A549 (cell line): ENCODE measurements at regions of chr20 and their contacts with region 1.

Region 1: GRCh38 chr20:51562332-51563155 is 20.0 kb upstream of the NFATC2 start:
- DNase-seq: peak; percentile 65 to 90
- ATAC-seq: peak; percentile 64 to 76
- H3K4me3 ChIP-seq: peak overlapping the region; percentile 59
- H3K27ac ChIP-seq: peak overlapping the region; percentile 88 to 89
- H3K4me1 ChIP-seq: peaks cover 45% of the 10 kb centered on the region
- CTCF ChIP-seq: peak; percentile 41
- EP300 ChIP-seq: no peak
- POLR2A ChIP-seq: no peak
- RAD21 ChIP-seq: peak; percentile 39 to 71; a peak in 4 of 5 replicates

Region 2: DNA sequence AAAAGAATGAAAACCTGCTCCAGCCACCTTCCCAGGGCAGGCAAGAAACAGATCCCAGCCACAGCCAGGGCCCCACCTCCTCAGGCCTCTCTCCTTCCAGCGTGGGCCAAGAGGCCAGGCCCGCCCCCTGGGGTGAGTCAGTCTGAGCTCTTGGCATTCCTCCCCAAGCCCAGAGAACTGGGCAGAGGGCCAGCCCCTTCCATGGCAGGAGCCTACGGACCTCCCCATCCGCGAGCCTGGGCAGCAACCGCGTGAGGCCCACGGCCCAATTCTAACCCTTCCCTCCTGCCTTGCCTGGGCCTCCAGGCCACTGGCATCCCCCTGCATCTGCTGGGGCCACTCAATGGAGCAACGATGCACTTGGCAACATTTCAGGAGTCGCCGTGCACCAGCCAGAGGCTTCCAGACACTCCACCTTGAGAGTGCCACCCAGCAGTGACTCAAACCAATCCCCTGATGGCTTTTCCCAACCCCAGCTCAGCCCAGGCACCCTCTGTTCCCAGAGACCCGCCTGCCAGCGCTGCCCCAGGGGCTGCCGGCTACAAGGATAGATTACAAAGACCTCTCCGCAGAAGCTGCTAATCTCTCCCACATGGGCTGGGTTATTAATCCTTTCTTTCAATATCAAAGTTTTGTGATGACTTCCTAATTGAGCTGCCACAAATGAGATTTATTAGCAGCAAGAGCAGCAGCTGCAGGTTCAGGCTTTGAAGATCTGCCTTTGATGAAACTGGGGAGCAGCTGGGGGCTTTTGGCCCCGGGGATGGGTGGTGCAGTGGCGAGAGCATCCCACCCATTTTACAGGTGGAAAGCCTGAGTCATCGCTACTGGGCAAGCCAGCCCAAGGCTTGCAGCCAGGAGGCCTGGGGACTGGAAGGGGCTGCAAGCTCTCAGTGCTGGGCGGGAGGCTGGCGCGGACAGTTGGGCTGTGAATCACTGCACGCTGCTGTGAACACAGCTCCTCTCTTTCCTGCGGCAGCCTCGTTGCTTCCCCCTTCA is 105.7 kb before region 1 on chr20:
- CTCF ChIA-PET with region 1: interaction called, 9 read pairs
- POLR2A ChIA-PET with region 1: interaction called, 29 read pairs
- DNase-seq: peak; percentile 86 to 96
- ATAC-seq: peak; percentile 93 to 94
- H3K4me3 ChIP-seq: peak overlapping the region; percentile 24; the same call in 1 of the 3 replicates
- H3K27ac ChIP-seq: peak overlapping the region; percentile 90 to 92
- H3K4me1 ChIP-seq: peaks cover 20% of the 10 kb centered on the region
- CTCF ChIP-seq: no peak
- EP300 ChIP-seq: no peak
- POLR2A ChIP-seq: peak; percentile 39
- RAD21 ChIP-seq: peak in 1 of 2 experiments; percentile 25; a peak in 2 of 5 replicates

Region 3: DNA sequence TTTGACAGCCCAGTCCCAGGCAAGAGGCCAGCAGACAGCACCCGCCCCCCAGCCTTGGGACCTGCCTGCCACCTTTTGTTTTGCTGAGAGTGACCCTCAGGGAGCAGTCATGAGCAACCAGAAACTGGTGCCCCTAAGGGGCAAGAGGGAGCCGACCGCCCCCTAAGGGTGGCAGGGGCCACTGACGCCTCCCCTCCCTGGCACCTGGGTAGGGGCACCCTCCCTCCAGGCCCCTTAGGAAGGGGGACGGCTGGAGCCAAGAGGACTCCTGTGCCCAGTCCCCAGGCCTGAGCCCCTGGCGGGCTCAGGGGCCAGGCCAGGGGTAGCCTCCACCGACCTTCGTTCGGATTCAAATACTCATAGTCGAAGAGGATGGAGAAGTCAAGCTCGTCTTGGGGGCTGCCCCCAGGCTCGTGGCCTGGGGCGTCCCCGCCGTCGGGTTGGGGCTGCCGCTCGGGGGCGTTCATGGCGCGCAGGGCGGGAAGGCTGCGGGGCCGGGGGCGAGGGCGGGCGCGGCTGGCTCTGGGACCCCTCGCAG is 20.4 kb before region 1 on chr20:
- CTCF ChIA-PET with region 1: interaction called, 10 read pairs
- POLR2A ChIA-PET with region 1: no interaction called
- DNase-seq: no peak
- ATAC-seq: 0 out of 6 replicates have a peak, but pooled peaks of 1 of the 2 experiments have one; percentile 11
- H3K4me3 ChIP-seq: no peak overlapping the region
- H3K27ac ChIP-seq: no peak overlapping the region
- H3K4me1 ChIP-seq: no peaks in the 10 kb centered on the region
- CTCF ChIP-seq: no peak
- EP300 ChIP-seq: no peak
- POLR2A ChIP-seq: no peak
- RAD21 ChIP-seq: no peak

Region 4: GRCh38 chr20:51573576-51574243 is 11.2 kb after region 1 on chr20:
- CTCF ChIA-PET with region 1: interaction called, 12 read pairs
- POLR2A ChIA-PET with region 1: no interaction called
- DNase-seq: no peak
- ATAC-seq: no peak
- H3K4me3 ChIP-seq: no peak overlapping the region
- H3K27ac ChIP-seq: no peak overlapping the region
- H3K4me1 ChIP-seq: peaks cover 15% of the 10 kb centered on the region
- CTCF ChIP-seq: no peak
- EP300 ChIP-seq: no peak
- POLR2A ChIP-seq: no peak
- RAD21 ChIP-seq: no peak